ENCODE measurements at regions of chr3 and their contacts with region 1.

Region 1: GRCh38 chr3:39177708-39178332 is 14.6 kb downstream of the XIRP1 start:
- DNase-seq: peak; percentile 73
- ATAC-seq: peak; percentile 53
- H3K4me3 Mint-ChIP-seq: peak overlapping the region; percentile 69
- H3K27ac Mint-ChIP-seq: peak overlapping the region; percentile 79
- H3K4me1 Mint-ChIP-seq: peaks cover 48% of the 10 kb centered on the region
- H3K27me3 Mint-ChIP-seq: peaks cover 3% of the 10 kb centered on the region

Region 2: GRCh38 chr3:39146984-39147591 is 30.7 kb before region 1 on chr3:
- POLR2A ChIA-PET with region 1: interaction called, 17 read pairs
- DNase-seq: peak; percentile 68
- ATAC-seq: peak; percentile 51
- H3K4me3 Mint-ChIP-seq: peak overlapping the region; percentile 96
- H3K27ac Mint-ChIP-seq: peak overlapping the region; percentile 97
- H3K4me1 Mint-ChIP-seq: peaks cover 59% of the 10 kb centered on the region
- H3K27me3 Mint-ChIP-seq: no peaks in the 10 kb centered on the region

Region 3: GRCh38 chr3:39202094-39202493 is 24.3 kb after region 1 on chr3:
- POLR2A ChIA-PET with region 1: no interaction called
- DNase-seq: no peak
- ATAC-seq: no peak
- H3K4me3 Mint-ChIP-seq: no peak overlapping the region
- H3K27ac Mint-ChIP-seq: no peak overlapping the region
- H3K4me1 Mint-ChIP-seq: no peaks in the 10 kb centered on the region
- H3K27me3 Mint-ChIP-seq: peaks cover 17% of the 10 kb centered on the region

Measured in activated naive CD8-positive, alpha-beta T cell treated with anti-CD3 and anti-CD28 coated beads, Interleukin-2, amount 10 ng/mL, durations not matched to agents 7 days and 5 days (primary cell).